GM12878 (cell line): ENCODE measurements at regions of chr6 and their contacts with region 1.

Region 1: DNA sequence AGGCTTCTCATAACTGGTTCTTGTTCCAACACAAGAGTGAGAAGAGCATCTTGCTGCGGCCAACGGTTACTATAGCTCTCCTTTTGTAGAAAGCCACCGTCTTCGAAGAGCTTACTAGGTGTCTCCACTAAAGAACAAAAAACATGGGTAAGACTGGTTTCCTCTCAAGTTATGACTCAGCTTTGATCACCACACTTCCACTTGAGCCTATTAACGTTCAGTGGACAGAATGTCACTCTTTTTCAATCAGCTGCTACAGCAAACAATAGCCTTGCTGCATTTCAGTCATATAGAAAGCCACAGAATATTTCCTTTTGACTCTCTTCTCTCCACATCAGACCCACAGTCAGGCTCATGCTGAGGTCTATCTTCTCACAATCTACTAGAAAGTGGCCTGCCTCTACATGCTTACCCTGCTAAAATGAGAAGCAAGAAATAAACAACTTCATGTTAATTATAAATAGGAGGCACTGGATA is 243.5 kb upstream of the PREP start:
- DNase-seq: peak; percentile 100
- ATAC-seq: peak; percentile 91
- H3K4me3 ChIP-seq: 0 out of 2 replicates have a peak overlapping the region, but pooled peaks have one; percentile 22
- H3K27ac ChIP-seq: peak overlapping the region; percentile 72
- H3K4me1 ChIP-seq: peaks cover 51% of the 10 kb centered on the region
- H3K27me3 ChIP-seq: no peaks in the 10 kb centered on the region; a peak in 1 of 4 replicates
- CTCF ChIP-seq: no peak
- EP300 ChIP-seq: peak; percentile 100
- POLR2A ChIP-seq: 0 out of 2 replicates have a peak, but pooled peaks have one; percentile 25
- RAD21 ChIP-seq: peak; percentile 32; the same call in 1 of the 2 replicates

Region 2: GRCh38 chr6:105459049-105459448 is 187.4 kb before region 1 on chr6:
- CTCF ChIA-PET with region 1: interaction called, 8 read pairs
- POLR2A ChIA-PET with region 1: interaction called, 11 read pairs
- RAD21 ChIA-PET with region 1: interaction called, 24 read pairs
- SMC1A ChIA-PET with region 1: interaction called, 90 read pairs
- in situ Hi-C with region 1: no loop called
- intact Hi-C with region 1: no loop called
- DNase-seq: peak; percentile 98
- ATAC-seq: peak; percentile 91
- H3K4me3 ChIP-seq: no peak overlapping the region
- H3K27ac ChIP-seq: peak overlapping the region; percentile 88
- H3K4me1 ChIP-seq: peaks cover 16% of the 10 kb centered on the region
- H3K27me3 ChIP-seq: no peaks in the 10 kb centered on the region
- CTCF ChIP-seq: no peak
- EP300 ChIP-seq: peak; percentile 99 to 100
- POLR2A ChIP-seq: peak; percentile 80
- RAD21 ChIP-seq: no peak

Region 3: DNA sequence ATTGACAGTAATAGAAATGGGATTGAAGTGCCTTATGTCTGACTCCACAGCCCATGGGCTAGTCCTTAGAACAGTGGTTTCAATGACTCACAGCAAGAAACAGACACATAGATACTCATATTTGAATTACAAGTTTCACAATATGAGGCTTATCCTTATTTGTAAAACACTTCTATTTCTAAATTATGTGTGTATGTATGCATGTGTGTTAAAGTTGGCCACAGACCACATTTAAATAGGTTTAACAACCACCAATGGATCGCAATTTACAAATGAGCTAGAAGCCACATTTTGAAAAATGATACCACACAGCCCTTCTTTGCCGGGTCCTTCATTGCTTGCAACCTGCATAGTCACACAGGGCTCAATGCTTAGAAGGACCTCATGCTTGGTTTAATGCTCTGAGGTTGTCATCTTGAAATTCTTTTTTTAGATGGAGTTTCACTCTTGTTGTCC is 85.8 kb before region 1 on chr6:
- CTCF ChIA-PET with region 1: no interaction called
- POLR2A ChIA-PET with region 1: interaction called, 3 read pairs
- RAD21 ChIA-PET with region 1: no interaction called
- SMC1A ChIA-PET with region 1: interaction called, 3 read pairs
- in situ Hi-C with region 1: no loop called
- intact Hi-C with region 1: loop called (anchors 1 kb)
- DNase-seq: peak; percentile 70
- ATAC-seq: peak; percentile 96
- H3K4me3 ChIP-seq: no peak overlapping the region
- H3K27ac ChIP-seq: peak overlapping the region; percentile 18; the same call in 1 of the 2 replicates
- H3K4me1 ChIP-seq: peaks cover 19% of the 10 kb centered on the region
- H3K27me3 ChIP-seq: no peaks in the 10 kb centered on the region; a peak in 1 of 4 replicates
- CTCF ChIP-seq: no peak
- EP300 ChIP-seq: peak in 1 of 2 experiments; percentile 70; a peak in 2 of 4 replicates
- POLR2A ChIP-seq: no peak
- RAD21 ChIP-seq: no peak

Region 4: GRCh38 chr6:105620878-105621277 is 25.6 kb before region 1 on chr6:
- CTCF ChIA-PET with region 1: no interaction called
- POLR2A ChIA-PET with region 1: no interaction called
- RAD21 ChIA-PET with region 1: interaction called, 4 read pairs
- SMC1A ChIA-PET with region 1: interaction called, 13 read pairs
- in situ Hi-C with region 1: no loop called
- intact Hi-C with region 1: no loop called
- DNase-seq: no peak
- ATAC-seq: peak; percentile 74
- H3K4me3 ChIP-seq: no peak overlapping the region
- H3K27ac ChIP-seq: no peak overlapping the region
- H3K4me1 ChIP-seq: no peaks in the 10 kb centered on the region
- H3K27me3 ChIP-seq: no peaks in the 10 kb centered on the region
- CTCF ChIP-seq: no peak
- EP300 ChIP-seq: peak in 1 of 2 experiments; percentile 50; a peak in 1 of 4 replicates
- POLR2A ChIP-seq: no peak
- RAD21 ChIP-seq: no peak

Region 5: DNA sequence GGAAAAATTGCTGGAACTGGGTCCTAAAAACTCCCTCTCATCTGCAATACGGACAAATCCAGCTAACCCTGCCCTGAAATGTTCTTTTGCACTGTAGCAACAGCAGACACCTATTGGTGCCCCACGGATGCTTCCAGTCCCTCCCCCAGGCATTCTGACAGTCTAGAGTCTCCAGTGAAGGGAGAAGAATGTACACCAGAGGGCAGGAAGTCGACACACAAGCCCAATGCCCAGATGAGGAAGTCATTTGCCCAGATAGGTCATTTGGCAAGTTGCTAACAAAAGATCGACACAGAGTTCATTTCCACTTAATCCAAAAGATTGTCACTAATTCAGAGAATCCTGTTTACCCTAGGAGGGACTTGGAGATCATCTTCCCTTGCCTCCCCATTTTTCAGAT is 146.7 kb after region 1 on chr6:
- CTCF ChIA-PET with region 1: interaction called, 3 read pairs
- POLR2A ChIA-PET with region 1: interaction called, 4 read pairs
- RAD21 ChIA-PET with region 1: interaction called, 10 read pairs
- SMC1A ChIA-PET with region 1: interaction called, 4 read pairs
- in situ Hi-C with region 1: no loop called
- intact Hi-C with region 1: loop called (anchors 5 kb)
- DNase-seq: no peak
- ATAC-seq: peak; percentile 46
- H3K4me3 ChIP-seq: no peak overlapping the region
- H3K27ac ChIP-seq: no peak overlapping the region
- H3K4me1 ChIP-seq: peaks cover 33% of the 10 kb centered on the region
- H3K27me3 ChIP-seq: 0 out of 4 replicates have a peak, but pooled peaks cover 0 to 2% of the 10 kb centered on the region in 2 experiments
- CTCF ChIP-seq: peak in 2 of 3 experiments; percentile 4 to 18; a peak in 1 of 6 replicates
- EP300 ChIP-seq: no peak
- POLR2A ChIP-seq: no peak
- RAD21 ChIP-seq: peak; percentile 31; the same call in 1 of the 2 replicates

Region 6: DNA sequence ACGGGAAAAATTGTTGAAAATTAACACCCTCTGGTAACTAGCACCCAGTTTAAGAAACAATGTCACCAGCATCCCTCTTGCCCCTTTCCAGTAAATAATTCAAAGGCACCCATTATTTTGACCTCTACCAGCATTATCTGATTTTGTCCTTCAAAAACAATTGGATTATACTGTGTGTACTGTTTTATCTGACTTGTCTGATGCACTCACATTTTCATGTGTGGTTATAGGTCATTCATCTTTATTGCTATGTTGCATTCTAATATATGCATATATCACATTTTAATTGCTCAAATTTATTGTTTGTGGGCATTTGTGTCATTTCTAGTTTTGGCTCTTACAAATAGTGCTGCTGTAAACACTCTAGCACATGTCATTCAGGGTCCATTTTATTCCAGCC is 178.8 kb after region 1 on chr6:
- CTCF ChIA-PET with region 1: no interaction called
- POLR2A ChIA-PET with region 1: no interaction called
- RAD21 ChIA-PET with region 1: no interaction called
- SMC1A ChIA-PET with region 1: no interaction called
- in situ Hi-C with region 1: no loop called
- intact Hi-C with region 1: no loop called
- DNase-seq: no peak
- ATAC-seq: no peak
- H3K4me3 ChIP-seq: no peak overlapping the region
- H3K27ac ChIP-seq: no peak overlapping the region
- H3K4me1 ChIP-seq: no peaks in the 10 kb centered on the region
- H3K27me3 ChIP-seq: no peaks in the 10 kb centered on the region
- CTCF ChIP-seq: no peak
- EP300 ChIP-seq: no peak
- POLR2A ChIP-seq: no peak
- RAD21 ChIP-seq: no peak

Region 7: GRCh38 chr6:106103728-106104109 is 457.3 kb after region 1 on chr6:
- CTCF ChIA-PET with region 1: no interaction called
- POLR2A ChIA-PET with region 1: no interaction called
- RAD21 ChIA-PET with region 1: no interaction called
- SMC1A ChIA-PET with region 1: interaction called, 3 read pairs
- in situ Hi-C with region 1: no loop called
- intact Hi-C with region 1: loop called (anchors 5 kb)
- DNase-seq: no peak
- ATAC-seq: peak; percentile 56
- H3K4me3 ChIP-seq: 0 out of 2 replicates have a peak overlapping the region, but pooled peaks have one; percentile 6
- H3K27ac ChIP-seq: 0 out of 2 replicates have a peak overlapping the region, but pooled peaks have one; percentile 15
- H3K4me1 ChIP-seq: peaks cover 46% of the 10 kb centered on the region
- H3K27me3 ChIP-seq: no peaks in the 10 kb centered on the region; a peak in 1 of 4 replicates
- CTCF ChIP-seq: no peak
- EP300 ChIP-seq: no peak
- POLR2A ChIP-seq: no peak
- RAD21 ChIP-seq: no peak